ENCODE measurements at regions of chr19 and their contacts with region 1.

Region 1: GRCh38 chr19:52922841-52923777 is at the start of gene ZNF888:
- DNase-seq: peak; percentile 33
- ATAC-seq: peak; percentile 99
- H3K4me3 ChIP-seq: peak within 1 kb of the TSS; percentile 77 to 91
- H3K27ac ChIP-seq: peak within 1 kb of the TSS; percentile 95
- H3K4me1 ChIP-seq: peaks cover 5% of the 10 kb centered on the region; the same call in 1 of the 2 replicates
- H3K27me3 ChIP-seq: no peaks in the 10 kb centered on the region
- CTCF ChIP-seq: no peak
- total RNA-seq, gene ZNF888: 7.4 TPM

Region 2: DNA sequence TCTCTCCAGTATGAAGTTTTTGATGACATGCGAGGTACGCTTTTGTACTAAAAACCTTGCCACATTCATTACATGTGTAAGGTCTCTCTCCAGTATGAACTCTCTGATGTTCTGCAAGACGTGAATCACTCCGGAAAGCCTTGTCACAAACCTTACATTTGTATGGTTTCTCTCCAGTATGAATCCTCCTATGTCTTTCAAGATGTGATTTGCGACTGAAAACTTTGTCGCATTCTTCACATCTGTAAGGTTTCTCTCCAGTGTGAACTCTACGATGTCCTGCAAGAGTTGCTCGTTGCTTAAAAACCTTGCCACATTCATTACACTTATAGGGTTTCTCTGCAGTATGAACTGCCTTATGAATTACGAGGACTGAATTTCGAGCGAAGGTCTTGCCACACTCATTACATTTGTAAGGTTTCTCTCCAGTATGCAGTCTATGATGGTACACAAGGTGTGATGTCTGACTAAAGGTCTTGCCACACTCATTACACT is 42.2 kb before region 1 on chr19:
- CTCF ChIA-PET with region 1: no interaction called
- POLR2A ChIA-PET with region 1: no interaction called
- in situ Hi-C with region 1: no loop called
- intact Hi-C with region 1: no loop called
- DNase-seq: no peak
- ATAC-seq: no peak
- H3K4me3 ChIP-seq: no peak overlapping the region
- H3K27ac ChIP-seq: no peak overlapping the region
- H3K4me1 ChIP-seq: no peaks in the 10 kb centered on the region
- H3K27me3 ChIP-seq: no peaks in the 10 kb centered on the region
- CTCF ChIP-seq: no peak

Region 3: GRCh38 chr19:52904052-52904451 is 19.1 kb before region 1 on chr19:
- CTCF ChIA-PET with region 1: no interaction called
- POLR2A ChIA-PET with region 1: interaction called, 14 read pairs
- in situ Hi-C with region 1: no loop called
- intact Hi-C with region 1: no loop called
- DNase-seq: no peak
- ATAC-seq: no peak
- H3K4me3 ChIP-seq: no peak overlapping the region
- H3K27ac ChIP-seq: no peak overlapping the region
- H3K4me1 ChIP-seq: no peaks in the 10 kb centered on the region
- H3K27me3 ChIP-seq: no peaks in the 10 kb centered on the region
- CTCF ChIP-seq: no peak

Region 4: DNA sequence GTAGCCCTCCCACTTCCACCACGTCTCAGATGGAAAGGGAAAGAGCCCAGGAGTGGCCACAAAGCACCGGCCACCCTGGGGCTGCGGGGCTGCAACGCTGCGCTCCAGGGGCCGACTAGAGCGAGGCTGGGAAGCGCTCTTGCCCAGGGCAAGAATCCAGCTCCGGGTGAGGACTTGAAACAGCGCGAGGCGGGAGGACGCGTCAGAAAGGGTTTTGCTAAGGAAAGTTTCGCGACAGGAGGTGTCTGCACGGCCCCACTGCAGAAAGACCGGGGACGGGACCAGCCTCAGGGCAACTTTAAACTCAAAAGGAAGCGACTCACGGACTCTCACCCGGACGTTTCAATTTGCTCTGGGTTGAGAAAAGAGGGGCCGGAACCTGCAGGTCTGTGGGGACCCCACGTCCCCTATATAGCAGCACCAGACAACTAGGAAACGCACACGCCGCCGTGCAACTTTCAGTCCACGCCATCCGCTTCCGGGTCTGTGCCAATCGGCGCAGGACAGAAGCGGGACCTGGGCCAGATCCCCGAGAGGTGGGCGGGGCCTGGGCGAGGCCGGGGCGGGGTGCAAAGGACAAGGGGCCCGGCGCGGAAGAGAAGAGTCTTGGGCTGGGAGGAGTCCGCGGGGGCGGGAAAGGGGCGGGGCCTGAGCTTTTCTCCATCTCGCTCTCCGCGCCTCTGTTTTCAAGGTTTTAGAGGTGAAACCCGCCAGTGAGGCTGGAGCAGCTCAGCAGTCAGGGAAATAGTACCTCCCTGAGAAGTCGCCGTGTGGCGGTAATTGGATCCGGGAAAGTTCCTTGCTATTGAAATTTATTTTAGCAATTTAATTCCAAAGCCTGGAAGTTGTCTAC is 39.5 kb after region 1 on chr19 and contains the start of gene ZNF816:
- CTCF ChIA-PET with region 1: no interaction called
- POLR2A ChIA-PET with region 1: no interaction called
- in situ Hi-C with region 1: no loop called
- intact Hi-C with region 1: no loop called
- DNase-seq: no peak
- ATAC-seq: peak; percentile 99
- H3K4me3 ChIP-seq: peak within 1 kb of the TSS; percentile 78 to 87
- H3K27ac ChIP-seq: peak within 1 kb of the TSS; percentile 86
- H3K4me1 ChIP-seq: no peaks in the 10 kb centered on the region; the same call in none of the 2 replicates
- H3K27me3 ChIP-seq: no peaks in the 10 kb centered on the region
- CTCF ChIP-seq: no peak
- total RNA-seq, gene ZNF816: 7.1 TPM